Esophagus muscularis mucosa (tissue), 4 donors: ENCODE measurements at regions of chr19 and their contacts with region 1.

Region 1: GRCh38 chr19:4980810-4981680 is 12.1 kb downstream of the KDM4B start:
- DNase-seq: no peak
- H3K4me3 ChIP-seq: no peak overlapping the region
- H3K27ac ChIP-seq: peak overlapping the region in 2 of 4 donors; percentile 2 to 28
- H3K4me1 ChIP-seq: peaks cover 55 to 96% (median 89%) of the 10 kb centered on the region in 4 donors
- H3K27me3 ChIP-seq: no peaks in the 10 kb centered on the region
- CTCF ChIP-seq: no peak
- EP300 ChIP-seq: no peak
- POLR2A ChIP-seq: no peak

Region 2: GRCh38 chr19:5023128-5023571 is 42.1 kb after region 1 on chr19:
- intact Hi-C with region 1: loop called (anchors 5 kb)
- DNase-seq: no peak
- H3K4me3 ChIP-seq: no peak overlapping the region
- H3K27ac ChIP-seq: peak overlapping the region; percentile 54 to 64 (median 58)
- H3K4me1 ChIP-seq: peaks cover 13 to 83% (median 51%) of the 10 kb centered on the region in 4 donors
- H3K27me3 ChIP-seq: no peaks in the 10 kb centered on the region
- CTCF ChIP-seq: no peak
- EP300 ChIP-seq: no peak
- POLR2A ChIP-seq: no peak

Region 3: DNA sequence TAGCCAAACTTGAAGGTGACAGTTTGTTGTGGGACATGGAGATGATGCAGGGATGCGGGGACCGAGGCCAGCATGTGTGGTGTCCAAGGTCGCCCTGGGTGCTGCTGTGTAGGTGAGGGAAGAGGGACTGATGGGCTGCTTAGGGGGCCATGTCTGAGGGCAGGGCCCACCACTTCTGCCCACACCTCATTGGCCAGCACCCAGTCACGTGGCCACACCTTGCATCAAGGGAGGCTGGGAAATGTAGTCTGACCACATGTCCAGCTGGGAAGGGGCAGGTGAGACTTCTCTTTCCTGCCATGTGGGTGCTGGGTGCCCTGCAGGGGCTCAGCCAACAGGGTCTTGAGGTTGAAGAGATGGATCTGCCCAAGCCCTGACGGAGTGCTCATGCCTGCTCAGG is 76.8 kb after region 1 on chr19:
- intact Hi-C with region 1: no loop called
- DNase-seq: no peak
- H3K4me3 ChIP-seq: no peak overlapping the region
- H3K27ac ChIP-seq: no peak overlapping the region
- H3K4me1 ChIP-seq: peaks cover 0 to 13% (median 8%) of the 10 kb centered on the region in 4 donors
- H3K27me3 ChIP-seq: no peaks in the 10 kb centered on the region
- CTCF ChIP-seq: no peak
- EP300 ChIP-seq: no peak
- POLR2A ChIP-seq: no peak